IMR-90 (cell line): ENCODE measurements at regions of chr22 and their contacts with region 1.

Region 1: GRCh38 chr22:32660292-32660691 is 141.2 kb upstream of the TIMP3 start:
- DNase-seq: peak; percentile 70
- ATAC-seq: peak; percentile 23; the same call in 1 of the 2 replicates
- H3K4me3 ChIP-seq: no peak overlapping the region
- H3K27ac ChIP-seq: no peak overlapping the region
- H3K4me1 ChIP-seq: peaks cover 14% of the 10 kb centered on the region
- H3K27me3 ChIP-seq: no peaks in the 10 kb centered on the region
- CTCF ChIP-seq: peak; percentile 70
- POLR2A ChIP-seq: no peak
- RAD21 ChIP-seq: peak; percentile 88

Region 2: GRCh38 chr22:32528984-32529982 is 131.0 kb before region 1 on chr22:
- CTCF ChIA-PET with region 1: interaction called, 11 read pairs
- POLR2A ChIA-PET with region 1: no interaction called
- dilution Hi-C with region 1: no loop called
- in situ Hi-C with region 1: no loop called
- intact Hi-C with region 1: loop called (anchors 1 kb)
- DNase-seq: peak; percentile 86
- ATAC-seq: peak; percentile 78
- H3K4me3 ChIP-seq: no peak overlapping the region
- H3K27ac ChIP-seq: peak overlapping the region; percentile 1; the same call in 1 of the 2 replicates
- H3K4me1 ChIP-seq: peaks cover 23% of the 10 kb centered on the region
- H3K27me3 ChIP-seq: no peaks in the 10 kb centered on the region
- CTCF ChIP-seq: peak; percentile 95
- POLR2A ChIP-seq: peak; percentile 67
- RAD21 ChIP-seq: peak; percentile 100

Region 3: DNA sequence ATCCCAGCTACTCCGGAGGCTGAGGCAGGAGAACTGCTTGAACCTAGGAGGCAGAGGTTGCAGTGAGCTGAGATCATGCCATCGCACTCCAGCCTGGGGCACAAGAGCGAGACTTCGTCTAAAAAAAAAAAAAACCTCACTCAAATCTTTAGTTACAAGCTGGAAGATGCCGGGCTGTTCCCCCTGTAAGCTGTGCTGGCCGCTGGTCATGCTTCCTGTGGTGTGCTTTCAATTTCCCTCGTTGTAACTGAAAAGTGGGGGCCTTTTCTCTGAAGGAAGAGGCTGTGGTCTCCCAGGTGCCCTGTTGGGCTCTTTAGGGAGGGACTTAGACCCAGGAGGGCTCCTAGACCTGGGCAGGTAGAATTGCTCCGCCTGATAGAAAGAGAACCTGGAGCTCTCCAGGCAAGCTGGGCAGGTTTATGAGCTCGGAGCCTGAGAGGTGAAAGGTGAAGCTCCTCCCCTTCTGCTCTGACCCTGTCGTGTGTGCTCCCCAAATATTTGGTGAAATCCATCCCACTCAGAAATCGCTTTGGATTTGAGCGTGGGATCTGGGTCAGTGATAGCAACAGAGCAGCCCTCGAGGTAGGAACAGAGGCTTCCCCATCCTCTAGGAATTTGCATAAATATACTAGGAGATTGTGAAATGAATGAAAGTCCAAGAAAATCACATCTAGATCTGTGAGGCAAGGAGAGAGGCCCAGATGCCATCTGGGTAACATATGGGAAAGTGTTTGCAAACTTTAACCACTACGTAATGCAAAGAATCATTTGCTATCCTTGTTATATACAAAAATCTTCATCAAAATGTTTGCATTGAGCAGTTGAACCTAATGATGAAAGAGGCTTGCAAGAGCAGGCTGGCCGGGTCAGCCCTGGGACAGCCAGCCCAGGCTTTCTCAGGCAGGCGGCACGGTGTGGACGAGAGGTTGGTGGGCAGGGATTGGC is 31.4 kb before region 1 on chr22:
- CTCF ChIA-PET with region 1: no interaction called
- POLR2A ChIA-PET with region 1: no interaction called
- dilution Hi-C with region 1: no loop called
- in situ Hi-C with region 1: no loop called
- intact Hi-C with region 1: loop called (anchors 2 kb)
- DNase-seq: peak; percentile 97
- ATAC-seq: peak; percentile 86
- H3K4me3 ChIP-seq: no peak overlapping the region
- H3K27ac ChIP-seq: peak overlapping the region; percentile 100
- H3K4me1 ChIP-seq: peaks cover 24% of the 10 kb centered on the region
- H3K27me3 ChIP-seq: no peaks in the 10 kb centered on the region
- CTCF ChIP-seq: no peak
- POLR2A ChIP-seq: no peak
- RAD21 ChIP-seq: no peak

Region 4: DNA sequence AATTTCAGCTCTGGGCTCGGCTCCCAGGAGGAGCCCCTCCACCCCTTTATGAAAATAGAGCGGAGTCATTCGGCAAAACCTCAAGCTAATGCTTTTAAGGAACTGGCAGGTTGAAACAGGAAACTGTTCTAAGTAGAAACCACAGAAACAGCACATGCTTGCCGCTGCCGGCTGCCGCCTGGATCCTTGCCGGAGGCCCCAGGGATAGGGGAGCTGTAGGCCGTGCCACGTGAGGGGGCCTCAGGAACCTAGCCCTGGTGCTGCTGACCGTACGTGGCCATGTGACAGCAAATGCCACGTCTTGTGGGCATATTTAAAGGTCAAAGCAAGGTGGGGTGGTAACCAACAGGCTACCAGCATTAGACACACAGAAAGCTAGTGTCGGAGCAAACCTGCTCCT is 63.4 kb after region 1 on chr22:
- CTCF ChIA-PET with region 1: no interaction called
- POLR2A ChIA-PET with region 1: no interaction called
- dilution Hi-C with region 1: no loop called
- in situ Hi-C with region 1: no loop called
- intact Hi-C with region 1: no loop called
- DNase-seq: peak; percentile 96
- ATAC-seq: peak; percentile 96
- H3K4me3 ChIP-seq: no peak overlapping the region
- H3K27ac ChIP-seq: peak overlapping the region; percentile 69
- H3K4me1 ChIP-seq: peaks cover 17% of the 10 kb centered on the region
- H3K27me3 ChIP-seq: no peaks in the 10 kb centered on the region
- CTCF ChIP-seq: no peak
- POLR2A ChIP-seq: no peak
- RAD21 ChIP-seq: no peak; the same call in 1 of the 2 replicates

Region 5: DNA sequence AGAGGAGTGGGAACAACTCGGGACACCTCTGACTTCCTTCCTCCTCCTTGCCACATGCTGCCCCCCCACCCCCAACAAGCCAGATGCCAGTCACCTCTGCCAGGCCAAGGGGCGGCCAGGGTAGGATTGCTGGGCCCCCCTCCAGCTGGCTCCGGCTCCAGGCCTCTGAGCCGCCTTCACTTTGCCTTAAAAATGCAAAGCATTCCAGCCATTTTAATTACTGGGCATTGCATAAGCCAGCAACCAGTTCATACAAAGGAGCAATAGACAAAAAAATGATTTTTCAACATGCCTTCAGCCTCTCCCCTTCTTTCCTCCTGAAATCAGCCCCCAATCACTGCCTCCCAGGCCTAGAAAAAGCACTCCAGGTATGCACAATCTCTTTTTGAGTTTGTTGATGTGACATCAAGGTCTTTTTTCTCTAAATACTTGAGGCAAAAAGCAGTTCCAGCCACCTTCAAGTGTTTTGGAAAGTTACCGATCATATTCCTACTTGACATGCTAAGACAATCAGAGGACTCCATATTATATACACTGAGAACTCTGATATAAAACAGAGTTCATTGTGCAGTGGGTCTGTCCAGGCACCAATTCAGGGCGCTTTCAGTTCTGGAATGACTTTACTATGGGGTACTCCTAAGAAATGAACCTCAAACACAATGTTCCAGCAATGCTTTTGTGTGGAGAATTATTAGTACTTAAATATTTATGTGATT is 128.8 kb after region 1 on chr22:
- CTCF ChIA-PET with region 1: interaction called, 54 read pairs
- POLR2A ChIA-PET with region 1: no interaction called
- dilution Hi-C with region 1: no loop called
- in situ Hi-C with region 1: no loop called
- intact Hi-C with region 1: loop called (anchors 2 kb)
- DNase-seq: peak; percentile 72
- ATAC-seq: peak; percentile 91
- H3K4me3 ChIP-seq: no peak overlapping the region
- H3K27ac ChIP-seq: peak overlapping the region; percentile 74; the same call in 1 of the 2 replicates
- H3K4me1 ChIP-seq: peaks cover 9% of the 10 kb centered on the region
- H3K27me3 ChIP-seq: no peaks in the 10 kb centered on the region
- CTCF ChIP-seq: no peak
- POLR2A ChIP-seq: no peak
- RAD21 ChIP-seq: no peak